Panc1 (cell line): ENCODE measurements at regions of chr14 and their contacts with region 1.

Region 1: GRCh38 chr14:65563763-65564162 is 151.2 kb downstream of the FUT8 start:
- DNase-seq: no peak
- ATAC-seq: no peak
- H3K4me3 ChIP-seq: no peak overlapping the region
- H3K27ac ChIP-seq: no peak overlapping the region
- H3K4me1 ChIP-seq: no peaks in the 10 kb centered on the region
- H3K27me3 ChIP-seq: no peaks in the 10 kb centered on the region
- CTCF ChIP-seq: no peak

Region 2: GRCh38 chr14:65550779-65551643 is 12.8 kb before region 1 on chr14:
- CTCF ChIA-PET with region 1: no interaction called
- POLR2A ChIA-PET with region 1: no interaction called
- in situ Hi-C with region 1: no loop called
- intact Hi-C with region 1: loop called (anchors 1 kb)
- DNase-seq: no peak
- ATAC-seq: no peak
- H3K4me3 ChIP-seq: no peak overlapping the region
- H3K27ac ChIP-seq: no peak overlapping the region
- H3K4me1 ChIP-seq: no peaks in the 10 kb centered on the region
- H3K27me3 ChIP-seq: no peaks in the 10 kb centered on the region
- CTCF ChIP-seq: no peak

Region 3: DNA sequence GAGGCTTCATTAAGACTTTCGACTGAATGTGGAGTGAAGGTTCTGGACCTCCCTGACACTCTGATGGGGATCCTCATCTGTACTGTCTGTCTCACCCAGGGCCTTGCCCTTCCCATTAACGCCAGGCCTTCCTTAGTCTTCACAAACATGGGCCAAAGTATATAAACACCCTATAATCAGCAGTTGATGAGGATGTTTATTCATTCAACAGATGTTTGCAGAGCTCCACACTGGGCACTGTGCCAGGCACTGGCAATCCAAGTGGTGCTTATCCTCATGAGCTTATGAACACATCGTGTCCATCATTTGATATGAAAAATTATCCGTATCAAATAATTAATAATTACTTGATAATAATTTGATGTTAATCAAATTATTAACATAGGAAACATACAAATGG is 303.1 kb after region 1 on chr14:
- CTCF ChIA-PET with region 1: no interaction called
- POLR2A ChIA-PET with region 1: no interaction called
- in situ Hi-C with region 1: no loop called
- intact Hi-C with region 1: no loop called
- DNase-seq: no peak
- ATAC-seq: no peak
- H3K4me3 ChIP-seq: no peak overlapping the region
- H3K27ac ChIP-seq: no peak overlapping the region
- H3K4me1 ChIP-seq: no peaks in the 10 kb centered on the region
- H3K27me3 ChIP-seq: no peaks in the 10 kb centered on the region; the same call in 1 of the 2 replicates
- CTCF ChIP-seq: no peak